MCF 10A (cell line): ENCODE measurements at regions of chr15 and their contacts with region 1.

Region 1: GRCh38 chr15:38252481-38253412 is at the start of gene SPRED1:
- DNase-seq: peak; percentile 56
- H3K4me3 Mint-ChIP-seq: peak within 1 kb of the TSS; percentile 83
- H3K27ac Mint-ChIP-seq: peak within 1 kb of the TSS; percentile 90
- H3K4me1 Mint-ChIP-seq: peaks cover 19% of the 10 kb centered on the region
- H3K27me3 Mint-ChIP-seq: no peaks in the 10 kb centered on the region
- CTCF ChIP-seq: no peak
- total RNA-seq, gene SPRED1: 26.4 and 28.1 TPM in 2 replicates

Region 2: GRCh38 chr15:37973856-37974255 is 278.9 kb before region 1 on chr15:
- CTCF ChIA-PET with region 1: no interaction called
- POLR2A ChIA-PET with region 1: no interaction called
- intact Hi-C with region 1: no loop called
- DNase-seq: no peak
- H3K4me3 Mint-ChIP-seq: no peak overlapping the region
- H3K27ac Mint-ChIP-seq: no peak overlapping the region
- H3K4me1 Mint-ChIP-seq: no peaks in the 10 kb centered on the region
- H3K27me3 Mint-ChIP-seq: no peaks in the 10 kb centered on the region
- CTCF ChIP-seq: no peak

Region 3: GRCh38 chr15:37995461-37996347 is 257.0 kb before region 1 on chr15:
- CTCF ChIA-PET with region 1: interaction called, 12 read pairs
- POLR2A ChIA-PET with region 1: interaction called, 3 read pairs
- intact Hi-C with region 1: no loop called
- DNase-seq: peak; percentile 82
- H3K4me3 Mint-ChIP-seq: no peak overlapping the region
- H3K27ac Mint-ChIP-seq: no peak overlapping the region
- H3K4me1 Mint-ChIP-seq: peaks cover 13% of the 10 kb centered on the region
- H3K27me3 Mint-ChIP-seq: peaks cover 26% of the 10 kb centered on the region
- CTCF ChIP-seq: peak; percentile 73

Region 4: DNA sequence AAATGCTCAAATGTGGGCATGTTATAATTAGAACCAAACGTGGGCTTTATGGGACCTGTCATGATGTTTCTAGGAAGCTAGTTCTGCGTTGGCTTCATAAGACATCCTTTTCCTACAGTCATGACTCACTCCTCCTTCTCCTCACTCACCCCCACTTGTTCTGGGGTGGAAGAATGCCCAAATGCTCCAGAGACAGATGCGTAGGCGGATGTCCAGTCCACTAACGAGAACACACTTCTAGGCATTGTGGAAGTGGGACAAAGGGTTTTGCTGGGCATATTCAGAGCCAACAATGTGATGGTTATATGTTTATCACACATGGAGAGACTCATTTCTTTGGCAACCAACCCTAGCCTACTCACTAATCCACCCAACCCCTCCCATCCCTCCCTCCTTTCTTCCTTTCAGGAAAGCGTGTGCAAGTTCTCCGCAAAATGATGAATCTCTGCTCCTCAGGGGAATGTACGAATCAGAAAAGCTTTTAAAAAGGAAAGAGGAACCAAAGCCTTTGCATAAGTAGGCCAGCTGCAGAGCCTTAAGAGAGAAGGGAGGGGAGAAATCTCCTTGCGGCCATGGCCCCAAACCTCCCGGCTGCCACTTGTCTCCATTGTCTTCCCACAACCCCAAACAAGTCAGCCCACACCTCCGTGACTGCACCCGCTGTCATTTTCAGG is 123.1 kb before region 1 on chr15:
- CTCF ChIA-PET with region 1: no interaction called
- POLR2A ChIA-PET with region 1: interaction called, 64 read pairs
- intact Hi-C with region 1: loop called (anchors 1 kb)
- DNase-seq: peak; percentile 99
- H3K4me3 Mint-ChIP-seq: peak overlapping the region; percentile 70
- H3K27ac Mint-ChIP-seq: peak overlapping the region; percentile 76
- H3K4me1 Mint-ChIP-seq: peaks cover 29% of the 10 kb centered on the region
- H3K27me3 Mint-ChIP-seq: no peaks in the 10 kb centered on the region
- CTCF ChIP-seq: no peak

Region 5: DNA sequence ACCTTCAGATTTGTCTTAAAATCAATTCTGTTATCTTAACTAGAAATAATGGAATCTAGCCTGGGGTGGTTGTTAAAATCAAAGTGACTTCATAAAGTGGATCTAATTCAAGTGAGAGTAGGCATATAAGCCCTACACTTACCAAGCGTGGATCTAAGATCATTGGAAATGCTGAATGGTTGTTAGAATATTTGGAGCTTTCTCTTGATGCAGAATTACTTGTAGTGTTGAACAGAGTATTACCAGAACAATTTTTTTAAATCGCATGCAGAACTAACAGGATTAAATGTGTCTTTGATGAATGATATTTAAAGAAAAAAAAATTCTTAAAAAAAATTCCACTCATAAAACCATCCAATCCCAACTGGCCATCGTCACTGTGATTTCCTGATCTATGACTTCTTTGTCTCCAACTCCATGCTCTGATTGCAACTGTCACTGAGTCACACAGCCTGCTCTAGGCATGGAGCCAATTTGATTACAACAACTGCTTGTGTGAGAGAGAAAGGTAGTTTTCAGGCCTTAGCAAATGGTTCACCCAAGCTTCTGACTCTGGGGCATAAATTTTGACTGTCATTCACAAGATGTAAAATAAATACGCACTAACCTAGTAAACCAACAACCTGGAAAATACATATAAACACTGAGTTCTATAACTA is 26.0 kb before region 1 on chr15:
- CTCF ChIA-PET with region 1: interaction called, 4 read pairs
- POLR2A ChIA-PET with region 1: interaction called, 98 read pairs
- intact Hi-C with region 1: no loop called
- DNase-seq: peak; percentile 95
- H3K4me3 Mint-ChIP-seq: no peak overlapping the region
- H3K27ac Mint-ChIP-seq: no peak overlapping the region
- H3K4me1 Mint-ChIP-seq: peaks cover 6% of the 10 kb centered on the region
- H3K27me3 Mint-ChIP-seq: no peaks in the 10 kb centered on the region
- CTCF ChIP-seq: no peak

Region 6: GRCh38 chr15:38297623-38298388 is 45.1 kb after region 1 on chr15:
- CTCF ChIA-PET with region 1: no interaction called
- POLR2A ChIA-PET with region 1: interaction called, 18 read pairs
- intact Hi-C with region 1: no loop called
- DNase-seq: peak; percentile 11
- H3K4me3 Mint-ChIP-seq: no peak overlapping the region
- H3K27ac Mint-ChIP-seq: no peak overlapping the region
- H3K4me1 Mint-ChIP-seq: peaks cover 21% of the 10 kb centered on the region
- H3K27me3 Mint-ChIP-seq: no peaks in the 10 kb centered on the region
- CTCF ChIP-seq: no peak

Region 7: DNA sequence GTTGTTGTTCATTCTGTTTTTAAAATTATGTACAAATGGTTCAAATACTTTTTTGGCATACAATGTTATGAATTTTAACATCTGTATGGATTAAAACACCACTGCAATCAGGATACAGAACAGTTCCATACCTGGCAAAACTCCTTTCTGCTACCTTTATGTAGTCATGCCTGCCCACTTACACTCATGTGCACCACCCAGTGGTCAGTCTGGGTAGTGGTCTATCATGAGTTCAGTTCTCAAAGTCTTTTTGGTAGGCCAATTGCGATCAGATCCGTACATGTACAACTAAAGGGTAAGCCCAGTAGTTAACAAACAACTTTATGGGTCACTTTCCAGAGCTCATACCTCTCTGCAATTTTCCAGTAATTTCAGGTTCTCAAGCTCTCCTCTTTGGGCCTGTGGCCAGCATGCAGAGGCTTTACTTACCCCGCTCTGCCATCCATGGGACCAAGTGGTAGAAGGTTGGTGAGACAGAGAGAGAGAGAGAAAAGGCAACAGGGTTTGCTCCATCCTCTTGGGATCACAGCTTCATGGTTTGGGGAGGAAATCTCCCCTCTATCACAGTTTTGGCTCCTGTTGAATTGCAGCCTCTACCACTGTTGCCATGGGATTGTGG is 137.3 kb after region 1 on chr15:
- CTCF ChIA-PET with region 1: no interaction called
- POLR2A ChIA-PET with region 1: no interaction called
- intact Hi-C with region 1: loop called (anchors 1 kb)
- DNase-seq: peak; percentile 77
- H3K4me3 Mint-ChIP-seq: no peak overlapping the region
- H3K27ac Mint-ChIP-seq: no peak overlapping the region
- H3K4me1 Mint-ChIP-seq: no peaks in the 10 kb centered on the region
- H3K27me3 Mint-ChIP-seq: no peaks in the 10 kb centered on the region
- CTCF ChIP-seq: peak; percentile 67